ENCODE measurements at regions of chr12 and their contacts with region 1.

Region 1: DNA sequence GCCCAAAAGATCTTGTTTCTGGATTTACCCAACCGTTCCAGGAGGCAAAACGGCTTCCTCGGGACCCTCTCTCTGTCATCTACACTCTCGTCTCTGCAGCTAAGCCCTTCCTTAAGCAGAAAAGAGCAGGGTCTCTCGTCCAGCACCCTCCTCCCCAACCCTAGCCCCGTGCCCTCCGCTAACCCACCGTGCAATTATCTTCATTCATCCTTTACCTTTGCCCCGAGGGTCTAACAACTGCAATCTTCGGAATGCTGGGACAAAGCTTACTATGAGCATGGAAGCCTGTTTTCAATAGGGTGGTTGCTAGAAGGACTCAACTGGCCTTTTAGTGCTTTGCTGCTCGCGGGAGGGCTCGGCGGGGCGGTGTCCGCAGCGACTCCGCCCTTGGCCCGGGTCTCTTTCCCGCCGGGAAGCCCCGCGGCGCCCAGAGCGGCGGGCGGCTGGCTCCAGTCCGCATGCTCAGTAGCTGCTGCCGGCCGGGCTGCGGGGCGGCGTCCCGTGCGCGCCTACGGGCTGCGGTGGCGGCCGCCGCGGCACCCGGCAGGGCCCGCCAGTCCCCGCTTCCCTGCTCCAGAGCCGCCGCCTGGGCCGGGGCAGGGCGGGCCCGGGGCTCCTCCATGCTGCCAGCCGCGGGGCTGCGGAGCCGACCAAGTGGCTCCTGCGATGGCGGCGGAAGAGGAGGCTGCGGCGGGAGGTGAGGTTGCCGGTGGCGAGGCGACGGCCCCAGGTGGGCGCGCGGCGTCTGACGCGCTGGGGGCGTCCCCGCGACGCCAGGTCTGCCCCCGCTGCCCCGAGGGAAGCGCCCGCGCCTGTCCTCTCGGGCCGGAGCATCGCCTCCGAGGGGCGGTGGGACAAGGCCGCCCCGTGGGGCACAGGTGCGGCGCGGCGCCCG is at the start of gene BMAL2:
- DNase-seq: peak in 1 of 2 experiments; percentile 79
- H3K4me3 ChIP-seq: peak within 1 kb of the TSS; percentile 80
- H3K27ac ChIP-seq: peak within 1 kb of the TSS; percentile 93
- H3K4me1 ChIP-seq: peaks cover 66% of the 10 kb centered on the region
- H3K27me3 ChIP-seq: no peaks in the 10 kb centered on the region
- CTCF ChIP-seq: no peak
- total RNA-seq, gene BMAL2: 56.7 and 87.9 TPM in 2 replicates

Region 2: GRCh38 chr12:27179400-27180214 is 153.0 kb before region 1 on chr12:
- CTCF ChIA-PET with region 1: no interaction called
- POLR2A ChIA-PET with region 1: no interaction called
- intact Hi-C with region 1: loop called (anchors 5 kb)
- DNase-seq: peak; percentile 73 to 97
- H3K4me3 ChIP-seq: no peak overlapping the region
- H3K27ac ChIP-seq: peak overlapping the region; percentile 90
- H3K4me1 ChIP-seq: peaks cover 66% of the 10 kb centered on the region
- H3K27me3 ChIP-seq: no peaks in the 10 kb centered on the region
- CTCF ChIP-seq: no peak

Region 3: GRCh38 chr12:27343255-27344000 is 10.8 kb after region 1 on chr12:
- CTCF ChIA-PET with region 1: no interaction called
- POLR2A ChIA-PET with region 1: interaction called, 23 read pairs
- intact Hi-C with region 1: loop called (anchors 1 kb)
- DNase-seq: peak; percentile 57 to 96
- H3K4me3 ChIP-seq: peak overlapping the region; percentile 28; the same call in 1 of the 2 replicates
- H3K27ac ChIP-seq: peak overlapping the region; percentile 99
- H3K4me1 ChIP-seq: peaks cover 66% of the 10 kb centered on the region
- H3K27me3 ChIP-seq: no peaks in the 10 kb centered on the region
- CTCF ChIP-seq: no peak

Region 4: DNA sequence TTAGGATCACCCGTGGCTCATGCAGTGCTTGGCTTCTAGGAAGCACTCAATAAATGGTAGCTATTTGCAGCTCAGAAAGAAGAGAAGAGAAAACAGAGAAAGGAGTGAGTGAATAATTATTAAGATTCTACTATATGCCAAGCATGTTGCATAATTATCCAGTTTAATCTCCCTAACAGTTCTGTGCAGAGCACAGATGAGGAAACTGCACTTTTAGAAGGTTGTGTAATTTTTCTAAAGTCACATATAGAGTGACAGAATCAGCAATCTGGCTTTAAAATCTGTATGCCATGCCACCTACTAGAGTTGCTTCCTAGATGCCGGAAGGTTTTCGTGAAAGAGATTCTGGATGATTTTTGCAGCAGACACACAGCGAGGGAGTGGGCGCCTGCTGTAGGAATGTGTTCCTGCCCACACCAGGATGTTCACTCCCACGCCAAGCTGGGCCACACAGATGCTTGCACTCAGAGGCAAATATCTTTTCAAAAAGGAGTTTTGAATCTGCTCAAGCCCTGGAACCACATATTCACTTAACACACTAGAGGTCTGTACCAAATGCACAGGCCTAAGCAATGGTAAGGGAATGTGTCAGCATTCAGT is 63.7 kb after region 1 on chr12:
- CTCF ChIA-PET with region 1: no interaction called
- POLR2A ChIA-PET with region 1: interaction called, 11 read pairs
- intact Hi-C with region 1: no loop called
- DNase-seq: no peak
- H3K4me3 ChIP-seq: no peak overlapping the region
- H3K27ac ChIP-seq: no peak overlapping the region
- H3K4me1 ChIP-seq: no peaks in the 10 kb centered on the region
- H3K27me3 ChIP-seq: no peaks in the 10 kb centered on the region
- CTCF ChIP-seq: no peak

Region 5: DNA sequence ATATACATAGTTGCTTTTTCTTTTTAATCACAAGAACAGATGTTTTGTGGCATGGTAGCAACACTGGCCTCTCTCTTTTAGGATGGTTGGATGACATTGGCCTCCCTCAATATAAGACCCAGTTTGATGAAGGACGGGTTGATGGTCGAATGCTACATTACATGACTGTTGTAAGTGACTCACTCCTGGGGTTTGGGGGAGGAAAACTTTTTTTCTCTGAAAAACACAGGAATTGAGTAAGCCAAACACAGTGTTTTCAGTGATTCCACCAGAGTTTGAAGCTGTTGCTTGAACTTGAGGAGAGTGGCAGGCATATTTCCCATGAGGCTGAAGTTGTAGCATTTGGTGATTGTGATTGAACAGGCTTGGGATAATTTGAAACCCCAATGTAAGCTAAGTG is 349.9 kb after region 1 on chr12:
- CTCF ChIA-PET with region 1: no interaction called
- POLR2A ChIA-PET with region 1: interaction called, 10 read pairs
- intact Hi-C with region 1: no loop called
- DNase-seq: no peak
- H3K4me3 ChIP-seq: no peak overlapping the region
- H3K27ac ChIP-seq: no peak overlapping the region
- H3K4me1 ChIP-seq: no peaks in the 10 kb centered on the region; the same call in 1 of the 2 replicates
- H3K27me3 ChIP-seq: no peaks in the 10 kb centered on the region
- CTCF ChIP-seq: no peak

Measured in PC-9 (cell line).